ENCODE measurements at regions of chr13 and their contacts with region 1.

Region 1: DNA sequence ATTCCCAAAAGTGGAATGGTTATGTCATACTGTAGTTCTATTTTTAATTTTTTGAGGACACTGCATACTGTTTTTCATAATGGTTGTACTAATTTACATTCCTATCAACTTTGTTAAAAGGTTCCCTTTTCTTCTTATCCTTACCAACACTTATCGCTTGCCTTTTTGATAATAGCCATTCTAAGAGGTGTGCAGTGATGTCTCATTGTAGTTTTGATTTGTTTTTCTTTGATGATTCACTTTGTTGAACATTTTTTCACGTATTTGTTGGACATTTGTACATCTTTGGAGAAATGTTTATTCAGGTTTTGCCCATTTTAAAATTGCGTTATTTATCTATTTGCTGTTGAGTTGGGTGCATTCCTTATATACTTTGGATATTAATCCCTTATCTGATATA is 188.8 kb upstream of the SPRY2 start:
- DNase-seq: no peak
- ATAC-seq: no peak
- H3K4me3 ChIP-seq: no peak overlapping the region
- H3K27ac ChIP-seq: no peak overlapping the region
- H3K4me1 ChIP-seq: no peaks in the 10 kb centered on the region
- H3K27me3 ChIP-seq: no peaks in the 10 kb centered on the region
- CTCF ChIP-seq: no peak
- EP300 ChIP-seq: no peak
- POLR2A ChIP-seq: no peak
- RAD21 ChIP-seq: no peak

Region 2: DNA sequence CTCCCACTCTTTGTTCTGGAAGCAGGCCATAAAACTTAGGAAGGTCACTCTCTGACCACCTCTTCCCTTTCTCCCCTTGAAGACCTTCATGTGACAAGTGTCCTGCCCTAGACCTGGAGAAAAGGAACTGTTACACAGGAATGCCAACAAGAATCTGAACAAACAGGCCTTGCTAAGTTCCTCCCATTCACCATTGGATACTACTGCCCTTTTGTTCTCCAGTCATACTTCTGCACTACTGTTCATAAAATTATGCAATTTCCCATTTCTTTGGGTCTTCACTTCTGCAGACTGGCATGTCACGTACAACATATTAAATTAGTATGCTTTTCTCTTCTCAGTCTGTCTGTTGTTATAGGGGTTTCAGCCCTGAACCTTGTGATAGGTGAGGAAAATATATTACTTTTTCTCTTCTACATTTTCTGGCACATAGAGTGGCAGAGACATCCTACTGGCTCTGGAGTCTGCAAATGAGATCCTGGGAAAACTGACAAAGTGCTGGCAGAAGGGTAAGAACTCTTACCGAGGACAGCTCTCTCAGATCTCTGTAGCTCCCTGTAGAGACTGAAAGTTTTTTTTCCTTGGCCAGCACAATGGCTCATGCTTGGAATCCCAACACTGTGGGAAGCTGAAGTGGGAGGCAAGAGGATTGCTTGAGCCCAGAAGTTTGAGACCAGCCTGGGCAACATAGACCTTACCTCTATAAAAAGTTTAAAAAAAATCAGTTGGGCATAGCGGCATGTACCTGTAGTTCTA is 101.2 kb before region 1 on chr13:
- CTCF ChIA-PET with region 1: no interaction called
- POLR2A ChIA-PET with region 1: no interaction called
- RAD21 ChIA-PET with region 1: no interaction called
- SMC1A ChIA-PET with region 1: no interaction called
- in situ Hi-C with region 1: no loop called
- intact Hi-C with region 1: no loop called
- DNase-seq: no peak
- ATAC-seq: no peak
- H3K4me3 ChIP-seq: no peak overlapping the region
- H3K27ac ChIP-seq: no peak overlapping the region
- H3K4me1 ChIP-seq: no peaks in the 10 kb centered on the region
- H3K27me3 ChIP-seq: no peaks in the 10 kb centered on the region
- CTCF ChIP-seq: no peak
- EP300 ChIP-seq: no peak
- POLR2A ChIP-seq: no peak
- RAD21 ChIP-seq: no peak

Region 3: GRCh38 chr13:80516818-80517348 is 12.9 kb before region 1 on chr13:
- CTCF ChIA-PET with region 1: interaction called, 5 read pairs
- POLR2A ChIA-PET with region 1: interaction called, 5 read pairs
- RAD21 ChIA-PET with region 1: no interaction called
- SMC1A ChIA-PET with region 1: interaction called, 12 read pairs
- in situ Hi-C with region 1: no loop called
- intact Hi-C with region 1: no loop called
- DNase-seq: no peak
- ATAC-seq: no peak
- H3K4me3 ChIP-seq: no peak overlapping the region
- H3K27ac ChIP-seq: no peak overlapping the region
- H3K4me1 ChIP-seq: no peaks in the 10 kb centered on the region
- H3K27me3 ChIP-seq: no peaks in the 10 kb centered on the region
- CTCF ChIP-seq: no peak
- EP300 ChIP-seq: no peak
- POLR2A ChIP-seq: no peak
- RAD21 ChIP-seq: no peak

Region 4: GRCh38 chr13:80547885-80548825 is 18.4 kb after region 1 on chr13:
- CTCF ChIA-PET with region 1: interaction called, 16 read pairs
- POLR2A ChIA-PET with region 1: interaction called, 5 read pairs
- RAD21 ChIA-PET with region 1: interaction called, 5 read pairs
- SMC1A ChIA-PET with region 1: interaction called, 68 read pairs
- in situ Hi-C with region 1: no loop called
- intact Hi-C with region 1: no loop called
- DNase-seq: no peak
- ATAC-seq: peak; percentile 32
- H3K4me3 ChIP-seq: no peak overlapping the region
- H3K27ac ChIP-seq: no peak overlapping the region
- H3K4me1 ChIP-seq: no peaks in the 10 kb centered on the region
- H3K27me3 ChIP-seq: no peaks in the 10 kb centered on the region
- CTCF ChIP-seq: no peak
- EP300 ChIP-seq: no peak
- POLR2A ChIP-seq: no peak
- RAD21 ChIP-seq: no peak

Measured in GM12878 (cell line).